CD8-positive, alpha-beta T cell (primary cell): ENCODE measurements at regions of chr19 and their contacts with region 1.

Region 1: DNA sequence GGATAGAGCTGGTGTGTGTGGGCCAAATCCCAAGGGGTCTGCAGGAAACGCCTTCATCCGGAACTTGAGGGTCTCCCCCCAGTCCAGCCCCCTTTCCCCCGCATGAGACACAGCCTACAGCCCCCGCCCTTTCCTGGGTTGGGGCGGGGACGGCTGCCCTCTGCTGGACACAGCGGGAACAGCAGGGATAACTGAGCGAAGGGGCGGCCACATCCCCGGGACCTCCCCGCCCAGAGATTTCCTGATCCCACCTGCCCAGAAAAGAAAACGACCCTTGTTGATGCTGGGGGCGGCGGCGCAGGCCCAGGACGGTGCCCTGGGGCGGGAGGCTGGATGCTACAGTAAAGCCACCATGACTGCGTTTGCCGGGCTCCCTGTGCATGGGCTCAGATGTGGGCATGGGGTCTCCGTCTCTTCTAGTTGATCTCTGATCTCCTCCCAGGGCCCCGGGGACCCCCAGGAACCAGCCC is 14.2 kb downstream of the ONECUT3 start:
- DNase-seq: peak; percentile 37 to 80 (median 63)
- ATAC-seq: peak; percentile 95
- H3K4me3 ChIP-seq: no peak overlapping the region
- H3K4me3 Mint-ChIP-seq: no peak overlapping the region
- H3K27ac ChIP-seq: no peak overlapping the region
- H3K27ac Mint-ChIP-seq: no peak overlapping the region
- H3K4me1 ChIP-seq: no peaks in the 10 kb centered on the region
- H3K4me1 Mint-ChIP-seq: no peaks in the 10 kb centered on the region
- H3K27me3 ChIP-seq: peaks cover 17 to 61% of the 10 kb centered on the region in 2 experiments
- H3K27me3 Mint-ChIP-seq: peaks cover 69% of the 10 kb centered on the region
- CTCF ChIP-seq: peak; percentile 85

Region 2: GRCh38 chr19:1540365-1540925 is 227.1 kb before region 1 on chr19:
- CTCF ChIA-PET with region 1: interaction called, 19 read pairs
- POLR2A ChIA-PET with region 1: no interaction called
- intact Hi-C with region 1: no loop called
- DNase-seq: no peak
- ATAC-seq: no peak
- H3K4me3 ChIP-seq: no peak overlapping the region
- H3K4me3 Mint-ChIP-seq: no peak overlapping the region
- H3K27ac ChIP-seq: no peak overlapping the region
- H3K27ac Mint-ChIP-seq: no peak overlapping the region
- H3K4me1 ChIP-seq: no peaks in the 10 kb centered on the region
- H3K4me1 Mint-ChIP-seq: no peaks in the 10 kb centered on the region
- H3K27me3 ChIP-seq: peaks cover under 1 to 7% of the 10 kb centered on the region in 2 experiments
- H3K27me3 Mint-ChIP-seq: peaks cover 25% of the 10 kb centered on the region
- CTCF ChIP-seq: no peak

Region 3: GRCh38 chr19:1551068-1552040 is 216.1 kb before region 1 on chr19:
- CTCF ChIA-PET with region 1: interaction called, 19 read pairs
- POLR2A ChIA-PET with region 1: no interaction called
- intact Hi-C with region 1: loop called (anchors 1 kb)
- DNase-seq: no peak
- ATAC-seq: no peak
- H3K4me3 ChIP-seq: no peak overlapping the region
- H3K4me3 Mint-ChIP-seq: no peak overlapping the region
- H3K27ac ChIP-seq: no peak overlapping the region
- H3K27ac Mint-ChIP-seq: no peak overlapping the region
- H3K4me1 ChIP-seq: no peaks in the 10 kb centered on the region
- H3K4me1 Mint-ChIP-seq: peaks cover under 1% of the 10 kb centered on the region
- H3K27me3 ChIP-seq: peaks cover 0 to 2% of the 10 kb centered on the region in 2 experiments
- H3K27me3 Mint-ChIP-seq: peaks cover 12% of the 10 kb centered on the region
- CTCF ChIP-seq: no peak

Region 4: DNA sequence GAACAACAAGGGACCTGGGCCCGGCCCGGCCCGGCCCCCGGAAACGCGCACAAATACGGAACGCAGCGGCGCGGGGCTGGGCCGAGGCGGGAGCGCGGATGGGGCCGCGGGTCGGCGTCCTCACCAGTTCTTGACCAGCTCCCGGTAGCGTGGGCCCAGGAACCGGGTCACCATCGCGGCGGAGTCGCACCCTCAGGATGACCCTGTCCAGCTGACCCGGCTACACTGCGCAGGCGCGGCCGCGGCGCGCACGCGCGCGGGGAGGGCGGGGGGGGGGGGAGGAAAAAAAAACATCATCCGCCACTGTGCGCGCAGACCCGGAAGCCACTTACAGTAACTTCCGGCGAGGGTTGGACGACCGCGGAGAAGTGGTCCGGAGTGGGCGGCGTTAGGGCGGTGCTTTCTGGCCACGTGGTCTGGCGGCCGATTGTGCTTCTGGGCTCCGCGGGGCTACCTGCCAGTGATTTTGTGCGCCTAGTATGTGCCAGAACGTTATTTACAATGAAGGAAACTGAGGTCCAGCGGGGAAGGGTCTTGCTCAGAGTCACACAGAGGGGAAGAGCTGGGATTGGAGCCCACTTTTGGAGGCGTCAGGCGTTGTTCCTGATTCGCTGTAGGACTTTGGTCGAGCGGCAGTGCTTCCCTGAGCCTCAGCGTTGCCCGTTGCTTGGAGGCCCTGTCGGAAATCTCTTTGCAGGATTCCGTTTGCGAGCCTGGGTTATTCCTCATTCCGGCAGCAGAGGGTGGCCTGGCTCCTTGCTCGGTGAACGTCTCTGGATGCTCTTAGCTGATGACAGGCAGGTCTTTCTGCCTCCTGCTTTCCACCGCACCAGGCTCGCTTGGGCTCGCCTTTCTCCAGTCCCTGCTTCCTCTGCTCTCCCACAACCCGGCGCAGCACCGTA is 162.0 kb before region 1 on chr19 and contains the start of gene UQCR11:
- CTCF ChIA-PET with region 1: no interaction called
- POLR2A ChIA-PET with region 1: no interaction called
- intact Hi-C with region 1: loop called (anchors 1 kb)
- DNase-seq: peak; percentile 76 to 96 (median 93)
- ATAC-seq: peak; percentile 83
- H3K4me3 ChIP-seq: peak within 1 kb of the TSS; percentile 76 to 100
- H3K4me3 Mint-ChIP-seq: peak within 1 kb of the TSS; percentile 99
- H3K27ac ChIP-seq: peak within 1 kb of the TSS; percentile 72 to 82
- H3K27ac Mint-ChIP-seq: peak within 1 kb of the TSS; percentile 99
- H3K4me1 ChIP-seq: peaks cover 51% of the 10 kb centered on the region
- H3K4me1 Mint-ChIP-seq: peaks cover 55% of the 10 kb centered on the region
- H3K27me3 ChIP-seq: no peaks in the 10 kb centered on the region
- H3K27me3 Mint-ChIP-seq: no peaks in the 10 kb centered on the region
- CTCF ChIP-seq: peak; percentile 90
- total RNA-seq, gene UQCR11: 97.1 to 98.0 TPM

Region 5: GRCh38 chr19:1680976-1681375 is 86.5 kb before region 1 on chr19:
- CTCF ChIA-PET with region 1: no interaction called
- POLR2A ChIA-PET with region 1: no interaction called
- intact Hi-C with region 1: no loop called
- DNase-seq: no peak
- ATAC-seq: no peak
- H3K4me3 ChIP-seq: no peak overlapping the region
- H3K4me3 Mint-ChIP-seq: no peak overlapping the region
- H3K27ac ChIP-seq: no peak overlapping the region
- H3K27ac Mint-ChIP-seq: no peak overlapping the region
- H3K4me1 ChIP-seq: no peaks in the 10 kb centered on the region
- H3K4me1 Mint-ChIP-seq: no peaks in the 10 kb centered on the region
- H3K27me3 ChIP-seq: peaks cover 5 to 19% of the 10 kb centered on the region in 2 experiments
- H3K27me3 Mint-ChIP-seq: peaks cover 49% of the 10 kb centered on the region
- CTCF ChIP-seq: no peak

Region 6: DNA sequence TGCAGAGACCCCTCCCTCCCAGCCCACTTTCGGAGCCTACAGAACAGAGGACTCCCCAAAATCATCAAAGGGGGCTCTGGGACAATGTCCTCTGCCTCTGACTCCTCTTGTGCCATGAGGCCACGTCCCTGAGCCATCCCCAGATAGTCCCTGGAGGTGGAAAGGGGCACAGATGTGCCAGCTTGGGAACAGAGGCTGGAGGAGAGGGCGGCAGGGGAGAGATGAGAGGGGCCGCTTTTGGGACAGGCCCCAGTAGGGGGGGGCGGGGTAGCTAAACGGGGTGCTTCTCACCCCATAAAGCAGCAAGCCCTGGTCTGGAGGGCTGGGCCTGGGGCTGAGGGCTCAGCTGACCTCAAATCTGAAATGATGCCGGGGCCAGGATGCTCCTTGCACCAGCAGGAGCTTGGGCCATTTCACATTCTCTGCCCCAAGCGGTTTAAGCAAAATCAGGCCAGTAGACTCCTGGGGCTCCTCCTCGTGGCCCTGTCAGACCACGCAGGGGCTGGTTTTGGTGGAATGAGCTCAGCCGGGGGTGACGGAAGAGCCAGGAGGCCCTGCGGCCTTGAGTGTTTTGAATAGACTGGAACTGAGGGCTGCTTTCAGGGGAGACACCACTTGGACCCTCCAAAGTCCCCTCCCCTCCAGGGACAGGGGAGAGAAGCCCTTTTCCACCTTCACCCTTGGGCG is 12.9 kb after region 1 on chr19:
- CTCF ChIA-PET with region 1: interaction called, 14 read pairs
- POLR2A ChIA-PET with region 1: no interaction called
- intact Hi-C with region 1: no loop called
- DNase-seq: no peak
- ATAC-seq: no peak
- H3K4me3 ChIP-seq: no peak overlapping the region
- H3K4me3 Mint-ChIP-seq: no peak overlapping the region
- H3K27ac ChIP-seq: no peak overlapping the region
- H3K27ac Mint-ChIP-seq: no peak overlapping the region
- H3K4me1 ChIP-seq: no peaks in the 10 kb centered on the region
- H3K4me1 Mint-ChIP-seq: no peaks in the 10 kb centered on the region
- H3K27me3 ChIP-seq: peaks cover 22 to 39% of the 10 kb centered on the region in 2 experiments
- H3K27me3 Mint-ChIP-seq: peaks cover 53% of the 10 kb centered on the region
- CTCF ChIP-seq: no peak

Region 7: DNA sequence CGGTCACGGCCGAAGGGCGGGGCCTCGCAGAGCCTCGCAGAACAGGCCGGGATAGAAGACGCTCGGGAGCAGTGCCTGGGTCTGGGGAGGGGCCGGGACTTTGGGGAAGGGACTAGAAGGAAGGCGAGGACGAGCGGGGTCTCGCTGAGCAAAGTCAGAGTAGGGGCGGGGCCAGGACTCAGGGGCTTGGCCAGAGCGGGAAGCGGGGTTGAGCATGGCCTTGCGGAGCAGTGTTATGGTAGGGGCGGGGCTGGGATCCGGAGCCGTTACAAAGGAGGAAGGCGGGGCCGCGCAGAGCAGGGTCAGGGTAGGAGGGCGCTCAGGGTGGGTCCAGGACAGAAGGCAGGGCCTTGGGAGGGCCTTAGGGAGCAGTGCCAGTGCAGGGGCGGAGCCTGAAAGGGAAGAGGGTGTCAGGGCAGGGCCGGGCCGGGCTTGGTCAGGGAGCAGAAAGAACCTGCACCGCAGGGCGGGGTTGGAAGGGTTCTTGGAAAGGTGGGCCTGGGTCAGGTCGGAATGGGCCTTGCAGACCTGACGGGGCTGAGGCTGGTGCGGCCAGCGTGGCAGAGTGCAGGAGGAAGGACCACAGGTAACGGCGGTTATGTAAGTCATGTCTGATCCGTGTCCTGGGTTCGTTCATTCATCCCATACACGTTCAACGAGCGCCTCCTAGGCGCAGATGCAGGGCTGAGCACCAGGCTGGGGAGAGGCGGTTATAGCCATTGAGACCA is 45.1 kb after region 1 on chr19:
- CTCF ChIA-PET with region 1: no interaction called
- POLR2A ChIA-PET with region 1: no interaction called
- intact Hi-C with region 1: no loop called
- DNase-seq: peak; percentile 62 to 91 (median 81)
- ATAC-seq: peak; percentile 76
- H3K4me3 ChIP-seq: peak overlapping the region; percentile 72 to 77
- H3K4me3 Mint-ChIP-seq: peak overlapping the region; percentile 91
- H3K27ac ChIP-seq: peak overlapping the region; percentile 34 to 45
- H3K27ac Mint-ChIP-seq: peak overlapping the region; percentile 87
- H3K4me1 ChIP-seq: peaks cover 12% of the 10 kb centered on the region
- H3K4me1 Mint-ChIP-seq: peaks cover 13% of the 10 kb centered on the region
- H3K27me3 ChIP-seq: no peaks in the 10 kb centered on the region
- H3K27me3 Mint-ChIP-seq: no peaks in the 10 kb centered on the region
- CTCF ChIP-seq: peak; percentile 65

Region 8: GRCh38 chr19:1884719-1885334 is 117.3 kb after region 1 on chr19:
- CTCF ChIA-PET with region 1: no interaction called
- POLR2A ChIA-PET with region 1: no interaction called
- intact Hi-C with region 1: no loop called
- DNase-seq: peak in 3 of 9 experiments; percentile 41 to 51 (median 48)
- ATAC-seq: no peak
- H3K4me3 ChIP-seq: peak overlapping the region; percentile 77 to 100
- H3K4me3 Mint-ChIP-seq: peak overlapping the region; percentile 100
- H3K27ac ChIP-seq: peak overlapping the region; percentile 92
- H3K27ac Mint-ChIP-seq: peak overlapping the region; percentile 99
- H3K4me1 ChIP-seq: peaks cover 40% of the 10 kb centered on the region
- H3K4me1 Mint-ChIP-seq: peaks cover 38% of the 10 kb centered on the region
- H3K27me3 ChIP-seq: no peaks in the 10 kb centered on the region
- H3K27me3 Mint-ChIP-seq: no peaks in the 10 kb centered on the region
- CTCF ChIP-seq: no peak